ENCODE measurements at regions of chr3 and their contacts with region 1.

Region 1: GRCh38 chr3:168952551-168952950 is 711.0 kb downstream of the MECOM start:
- DNase-seq: peak in 1 of 2 experiments; percentile 55
- H3K4me3 ChIP-seq: no peak overlapping the region
- H3K27ac ChIP-seq: peak overlapping the region; percentile 64
- H3K4me1 ChIP-seq: peaks cover 33% of the 10 kb centered on the region
- H3K27me3 ChIP-seq: no peaks in the 10 kb centered on the region
- CTCF ChIP-seq: peak; percentile 58; the same call in 1 of the 2 replicates

Region 2: DNA sequence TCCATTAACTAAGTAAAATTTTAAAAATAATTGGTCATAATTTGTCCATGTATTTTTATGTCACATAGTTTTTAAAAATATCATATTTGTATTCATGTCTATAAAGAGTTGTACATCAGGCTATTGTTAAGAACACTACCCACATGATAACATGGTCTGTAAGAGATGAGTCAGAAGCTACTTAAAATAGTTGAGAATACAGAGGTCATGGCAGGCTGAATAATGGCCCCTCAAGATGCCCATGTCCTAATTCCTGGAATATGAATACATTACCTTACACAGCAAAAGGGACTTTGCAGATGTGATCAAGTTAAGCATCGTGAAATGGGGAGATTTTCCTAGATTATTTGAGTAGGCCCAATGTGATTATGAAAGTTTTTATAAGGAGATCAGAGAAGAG is 73.9 kb before region 1 on chr3:
- CTCF ChIA-PET with region 1: interaction called, 5 read pairs
- POLR2A ChIA-PET with region 1: no interaction called
- intact Hi-C with region 1: loop called (anchors 2 kb)
- DNase-seq: peak in 1 of 2 experiments; percentile 65
- H3K4me3 ChIP-seq: no peak overlapping the region
- H3K27ac ChIP-seq: peak overlapping the region; percentile 61
- H3K4me1 ChIP-seq: peaks cover 34% of the 10 kb centered on the region
- H3K27me3 ChIP-seq: no peaks in the 10 kb centered on the region
- CTCF ChIP-seq: no peak

Region 3: DNA sequence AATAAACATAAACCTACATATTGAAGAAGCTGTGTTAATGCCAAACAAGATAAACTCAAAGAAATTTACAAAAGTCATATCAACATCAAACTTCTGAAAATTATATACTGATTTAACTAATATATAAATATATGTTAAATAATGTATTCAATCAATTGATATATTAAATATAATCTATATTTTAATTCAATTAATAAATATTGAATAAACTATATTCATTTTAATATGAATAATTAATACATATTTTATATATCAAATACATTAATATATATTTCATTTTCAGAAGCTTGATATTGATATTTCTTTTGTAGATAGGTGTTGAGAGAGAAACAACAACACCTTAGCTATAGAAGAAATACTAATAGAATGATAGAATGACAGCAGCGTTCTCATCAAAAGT is 57.1 kb before region 1 on chr3:
- CTCF ChIA-PET with region 1: no interaction called
- POLR2A ChIA-PET with region 1: no interaction called
- intact Hi-C with region 1: no loop called
- DNase-seq: no peak
- H3K4me3 ChIP-seq: no peak overlapping the region
- H3K27ac ChIP-seq: no peak overlapping the region
- H3K4me1 ChIP-seq: no peaks in the 10 kb centered on the region
- H3K27me3 ChIP-seq: no peaks in the 10 kb centered on the region
- CTCF ChIP-seq: no peak

Region 4: DNA sequence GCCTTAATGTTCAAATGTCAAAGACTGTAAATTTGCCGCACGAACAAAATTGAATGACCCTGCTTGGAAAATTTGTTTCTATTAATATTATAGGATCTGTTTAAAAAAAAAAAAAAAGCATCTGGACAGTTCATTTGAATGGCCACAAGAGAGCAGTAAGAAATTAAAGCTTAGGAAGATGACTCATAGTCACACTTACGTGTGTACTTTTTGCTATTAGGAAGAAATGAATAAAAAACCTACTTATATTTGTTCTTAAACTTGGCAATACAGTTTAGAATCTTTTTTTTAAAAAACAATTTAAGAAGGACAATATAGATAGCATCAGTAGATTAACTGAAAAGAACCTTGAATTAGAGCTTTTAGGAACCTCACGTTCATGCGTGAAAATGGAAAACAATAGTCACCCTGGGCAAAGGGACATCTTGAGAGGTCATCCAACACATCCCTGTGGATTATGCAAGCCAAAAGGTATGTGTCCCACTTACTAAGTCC is 89.2 kb after region 1 on chr3:
- CTCF ChIA-PET with region 1: no interaction called
- POLR2A ChIA-PET with region 1: no interaction called
- intact Hi-C with region 1: loop called (anchors 5 kb)
- DNase-seq: peak in 1 of 2 experiments; percentile 66
- H3K4me3 ChIP-seq: no peak overlapping the region
- H3K27ac ChIP-seq: no peak overlapping the region
- H3K4me1 ChIP-seq: peaks cover 25% of the 10 kb centered on the region
- H3K27me3 ChIP-seq: no peaks in the 10 kb centered on the region
- CTCF ChIP-seq: peak; percentile 78

Region 5: GRCh38 chr3:169052465-169053302 is 100.1 kb after region 1 on chr3:
- CTCF ChIA-PET with region 1: no interaction called
- POLR2A ChIA-PET with region 1: no interaction called
- intact Hi-C with region 1: no loop called
- DNase-seq: no peak
- H3K4me3 ChIP-seq: no peak overlapping the region
- H3K27ac ChIP-seq: no peak overlapping the region
- H3K4me1 ChIP-seq: no peaks in the 10 kb centered on the region
- H3K27me3 ChIP-seq: no peaks in the 10 kb centered on the region
- CTCF ChIP-seq: no peak

Region 6: DNA sequence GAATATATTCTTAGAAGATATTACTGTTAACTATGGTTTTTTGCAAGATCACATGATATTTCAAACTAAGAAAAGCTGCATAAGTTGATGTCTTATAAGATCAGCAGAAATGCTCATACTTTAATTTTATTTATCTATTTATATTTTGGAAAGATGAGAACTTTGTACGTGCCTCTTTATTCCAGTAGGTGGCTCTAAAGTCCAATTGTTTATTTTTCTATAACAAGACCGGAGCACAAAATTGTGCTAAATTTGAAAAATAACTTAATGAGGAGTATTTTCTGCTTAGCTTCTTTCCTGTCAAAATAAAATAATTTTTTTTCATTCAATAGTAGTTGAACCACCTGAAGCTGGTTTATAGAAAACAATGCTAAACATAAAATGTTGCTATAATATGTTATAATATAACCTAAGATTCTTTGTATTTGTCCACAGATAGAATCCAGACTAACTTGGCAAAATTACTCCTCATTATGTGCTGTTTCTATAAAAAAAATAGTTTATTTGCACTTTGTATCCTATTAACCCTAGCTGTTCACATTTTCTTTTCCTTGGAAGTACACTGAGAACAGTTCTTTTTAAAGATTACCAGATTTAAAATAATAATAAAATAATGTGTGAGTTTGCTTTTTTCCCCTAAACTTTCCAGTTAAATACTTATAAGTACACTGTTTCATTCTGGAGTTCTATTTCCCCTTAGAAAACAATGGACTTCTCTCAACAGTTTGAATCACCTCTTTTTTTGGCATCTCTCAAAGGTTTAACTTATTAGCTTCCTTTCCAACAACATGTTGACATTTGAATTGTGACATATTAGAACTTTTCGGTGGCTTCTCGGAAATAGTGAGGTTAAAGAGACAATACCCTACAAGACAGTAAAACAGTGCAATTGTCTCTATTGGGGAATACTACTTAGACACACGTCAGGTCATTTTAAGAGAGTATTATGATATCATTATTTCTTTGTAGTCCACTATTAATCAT is 180.9 kb after region 1 on chr3:
- CTCF ChIA-PET with region 1: interaction called, 11 read pairs
- POLR2A ChIA-PET with region 1: no interaction called
- intact Hi-C with region 1: no loop called
- DNase-seq: no peak
- H3K4me3 ChIP-seq: no peak overlapping the region
- H3K27ac ChIP-seq: 0 out of 2 replicates have a peak overlapping the region, but pooled peaks have one; percentile 13
- H3K4me1 ChIP-seq: peaks cover 19% of the 10 kb centered on the region; the same call in 1 of the 2 replicates
- H3K27me3 ChIP-seq: no peaks in the 10 kb centered on the region
- CTCF ChIP-seq: peak; percentile 82

Region 7: GRCh38 chr3:169295126-169295525 is 342.6 kb after region 1 on chr3:
- CTCF ChIA-PET with region 1: no interaction called
- POLR2A ChIA-PET with region 1: no interaction called
- intact Hi-C with region 1: no loop called
- DNase-seq: no peak
- H3K4me3 ChIP-seq: no peak overlapping the region
- H3K27ac ChIP-seq: no peak overlapping the region
- H3K4me1 ChIP-seq: peaks cover 11% of the 10 kb centered on the region
- H3K27me3 ChIP-seq: no peaks in the 10 kb centered on the region
- CTCF ChIP-seq: peak; percentile 80

Region 8: DNA sequence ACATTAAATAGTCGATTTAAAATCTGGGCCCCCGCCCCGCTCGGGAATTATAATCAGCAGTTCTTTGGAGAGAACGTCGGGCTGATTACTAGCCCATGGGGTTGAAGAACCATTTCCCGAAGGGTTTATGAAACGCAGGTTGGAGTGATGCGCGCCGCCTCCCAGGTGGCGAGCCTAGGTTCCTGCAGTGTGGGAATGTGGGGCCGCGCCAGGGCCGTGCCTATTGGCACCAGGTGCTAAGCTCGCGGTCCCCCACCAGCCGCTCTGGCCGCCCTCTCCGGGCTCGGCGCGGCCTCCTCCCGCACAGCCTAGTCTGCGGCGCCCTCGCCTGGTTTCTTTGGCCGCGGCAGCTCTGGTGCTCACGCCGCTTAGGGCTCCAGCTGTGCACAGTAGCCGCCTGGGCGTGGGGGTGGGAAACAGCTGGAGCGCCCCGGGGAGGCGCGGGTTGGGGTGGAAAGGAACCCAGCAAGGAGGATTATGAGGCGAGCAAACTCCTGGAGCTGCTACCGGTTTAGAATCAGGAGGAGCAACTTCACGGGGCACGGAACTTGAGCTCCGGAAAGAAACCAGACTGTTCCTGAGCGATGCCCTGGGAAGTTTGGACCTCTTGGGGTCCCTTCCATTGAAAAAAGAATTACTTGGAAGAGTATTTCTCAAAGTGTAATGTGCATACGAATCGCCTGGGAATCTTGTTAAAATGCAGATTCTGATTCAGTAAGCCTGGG is 716.6 kb after region 1 on chr3:
- CTCF ChIA-PET with region 1: interaction called, 7 read pairs
- POLR2A ChIA-PET with region 1: interaction called, 3 read pairs
- intact Hi-C with region 1: loop called (anchors 1 kb)
- DNase-seq: peak; percentile 78 to 88
- H3K4me3 ChIP-seq: peak overlapping the region; percentile 61
- H3K27ac ChIP-seq: no peak overlapping the region
- H3K4me1 ChIP-seq: peaks cover 18% of the 10 kb centered on the region; the same call in 1 of the 2 replicates
- H3K27me3 ChIP-seq: peaks cover 4% of the 10 kb centered on the region; the same call in 1 of the 2 replicates
- CTCF ChIP-seq: peak; percentile 91